Sciatic nerve (tissue), 2 donors: ENCODE measurements at regions of chr1 and their contacts with region 1.

Region 1: DNA sequence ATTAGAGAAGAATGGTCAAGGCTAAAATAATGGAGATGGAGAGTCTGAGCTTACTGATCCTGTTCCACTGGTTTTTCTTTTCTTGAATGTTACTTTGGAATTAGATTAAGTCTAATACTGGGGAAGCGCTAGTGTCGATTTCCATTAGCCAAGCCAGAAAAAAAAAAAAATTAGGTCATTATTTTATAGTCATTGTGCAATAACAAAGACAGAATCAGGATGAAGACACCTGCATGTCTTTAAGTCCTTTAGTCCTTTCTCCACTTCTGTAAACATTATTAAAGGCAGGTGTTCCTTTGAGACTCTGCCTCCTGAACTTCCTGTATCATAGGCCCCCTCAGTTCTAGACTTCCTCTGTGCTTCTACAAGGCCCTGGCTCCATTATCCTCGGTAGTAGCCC is 42.8 kb downstream of the MYSM1 start:
- DNase-seq: no peak
- ATAC-seq: no peak

Region 2: DNA sequence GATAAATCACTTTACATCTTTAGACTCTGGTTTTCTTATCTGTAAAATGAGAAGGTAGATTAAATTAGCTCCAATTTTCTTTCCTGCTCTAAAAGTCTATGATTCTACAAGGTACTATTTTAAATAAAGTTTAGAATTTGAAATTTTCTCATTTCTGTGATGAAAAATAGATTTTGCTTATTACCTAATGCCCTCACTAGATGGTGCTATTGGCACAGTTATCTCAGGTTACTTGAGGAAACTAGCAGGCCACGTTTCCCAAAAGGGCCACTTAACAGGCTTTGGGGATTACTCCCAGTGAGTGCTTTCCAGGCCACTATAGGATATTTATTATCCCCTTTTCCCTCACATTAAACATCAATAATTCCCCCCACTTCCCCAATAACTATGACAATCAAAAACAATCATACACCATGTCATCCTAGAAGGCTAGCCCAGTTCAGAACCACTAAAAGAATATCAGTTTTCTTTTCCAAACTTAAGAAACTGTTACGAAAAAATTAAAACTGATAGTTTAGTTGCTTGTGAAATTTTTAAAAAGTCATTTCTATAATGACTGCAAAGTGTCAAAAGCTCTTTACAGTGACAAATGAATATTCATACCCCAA is 141.2 kb before region 1 on chr1:
- intact Hi-C with region 1: loop called (anchors 5 kb)
- DNase-seq: peak; percentile 57
- ATAC-seq: peak; percentile 77